PC-3 (cell line): ENCODE measurements at regions of chr15 and their contacts with region 1.

Region 1: GRCh38 chr15:40382580-40383456 is at the start of gene KNSTRN:
- DNase-seq: peak; percentile 96
- ATAC-seq: peak; percentile 75
- H3K4me3 ChIP-seq: peak within 1 kb of the TSS; percentile 91
- H3K27ac ChIP-seq: peak within 1 kb of the TSS; percentile 19
- H3K4me1 ChIP-seq: peaks cover 35% of the 10 kb centered on the region
- H3K27me3 ChIP-seq: no peaks in the 10 kb centered on the region
- CTCF ChIP-seq: no peak
- total RNA-seq, gene KNSTRN: 115 and 125 TPM in 2 replicates

Region 2: DNA sequence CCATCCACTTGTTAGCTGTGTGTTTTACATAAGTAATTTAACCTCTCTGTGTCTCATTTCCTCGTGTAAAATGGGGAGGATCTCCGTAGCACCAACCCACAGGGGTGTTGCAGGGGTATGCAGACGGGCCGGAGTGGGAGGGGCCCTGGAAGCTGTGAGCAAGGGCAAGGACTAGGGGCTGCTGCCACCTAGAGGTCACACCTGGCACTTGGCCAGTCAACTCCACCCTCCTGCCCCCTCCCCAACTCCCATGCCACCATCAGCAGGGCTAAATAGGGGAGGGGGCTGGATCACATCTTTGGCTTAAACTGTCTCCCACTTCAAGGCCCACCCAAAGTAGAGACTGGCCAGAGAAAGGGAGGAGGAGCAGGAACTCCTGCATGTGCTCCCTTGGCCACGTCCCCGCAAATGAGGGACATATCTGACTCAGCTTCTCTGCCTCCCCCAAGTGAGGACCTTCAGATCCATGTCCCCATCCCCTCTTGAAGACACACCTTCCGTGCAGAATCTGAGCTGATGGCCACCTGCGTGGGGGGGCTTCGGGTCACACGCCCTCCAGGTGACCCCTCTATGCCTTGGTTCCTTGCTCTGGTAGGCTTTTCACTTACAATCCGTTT is 44.7 kb before region 1 on chr15:
- CTCF ChIA-PET with region 1: no interaction called
- POLR2A ChIA-PET with region 1: no interaction called
- intact Hi-C with region 1: no loop called
- DNase-seq: peak; percentile 73
- ATAC-seq: peak; percentile 3; the same call in 1 of the 2 replicates
- H3K4me3 ChIP-seq: peak overlapping the region; percentile 75
- H3K27ac ChIP-seq: peak overlapping the region; percentile 100
- H3K4me1 ChIP-seq: peaks cover 66% of the 10 kb centered on the region
- H3K27me3 ChIP-seq: no peaks in the 10 kb centered on the region
- CTCF ChIP-seq: peak; percentile 90

Region 3: DNA sequence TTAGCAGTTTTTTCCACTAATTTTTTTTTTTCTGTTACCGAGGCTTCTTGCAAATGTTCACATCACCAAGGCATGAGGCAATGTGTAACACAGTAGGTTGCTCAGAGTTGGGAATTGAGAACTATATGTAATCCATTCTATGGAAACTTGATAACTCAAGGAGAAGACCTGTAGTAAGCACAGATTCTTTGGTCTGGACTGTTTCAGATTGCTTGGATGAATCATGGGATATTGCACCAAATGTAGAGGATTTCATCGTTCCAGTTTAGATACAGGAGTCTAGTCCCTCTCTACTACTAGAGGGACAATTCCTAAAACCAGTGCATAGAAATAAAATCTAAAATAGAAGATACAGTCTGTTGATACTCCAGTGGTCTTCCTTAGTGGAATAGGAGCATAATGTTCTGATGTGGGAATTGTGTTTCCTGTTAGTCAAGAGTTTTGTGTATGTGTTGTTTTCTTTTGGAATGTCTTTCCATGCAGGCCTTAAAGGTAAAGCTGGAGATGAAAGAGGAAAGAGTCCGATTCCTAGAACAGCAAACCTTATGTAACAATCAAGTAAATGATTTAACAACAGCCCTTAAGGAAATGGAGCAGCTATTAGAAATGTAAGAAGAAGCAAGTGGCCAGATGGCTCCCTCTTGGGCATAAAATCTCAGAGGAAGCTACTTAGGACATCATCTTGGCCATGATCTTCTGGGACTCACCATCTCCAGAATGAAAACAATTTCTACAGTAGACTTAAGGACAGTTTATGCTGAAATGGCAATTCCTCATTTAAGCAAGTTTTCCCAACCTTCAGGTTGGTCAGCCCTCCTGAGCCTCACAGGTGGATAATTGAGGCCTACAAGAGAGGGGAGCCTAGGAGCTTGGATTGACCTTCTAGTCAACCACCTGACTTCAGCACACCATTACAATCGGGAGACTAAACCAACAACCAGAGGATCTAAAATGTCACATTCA is 10.4 kb after region 1 on chr15:
- CTCF ChIA-PET with region 1: no interaction called
- POLR2A ChIA-PET with region 1: no interaction called
- intact Hi-C with region 1: no loop called
- DNase-seq: no peak
- ATAC-seq: no peak
- H3K4me3 ChIP-seq: no peak overlapping the region
- H3K27ac ChIP-seq: no peak overlapping the region
- H3K4me1 ChIP-seq: no peaks in the 10 kb centered on the region
- H3K27me3 ChIP-seq: no peaks in the 10 kb centered on the region
- CTCF ChIP-seq: no peak

Region 4: GRCh38 chr15:40405501-40406381 is 22.9 kb after region 1 on chr15 and contains the start of gene IVD:
- CTCF ChIA-PET with region 1: no interaction called
- POLR2A ChIA-PET with region 1: interaction called, 4 read pairs
- intact Hi-C with region 1: loop called (anchors 1 kb)
- DNase-seq: peak; percentile 98
- ATAC-seq: peak; percentile 98
- H3K4me3 ChIP-seq: peak within 1 kb of the TSS; percentile 92
- H3K27ac ChIP-seq: peak within 1 kb of the TSS; percentile 55
- H3K4me1 ChIP-seq: peaks cover 21% of the 10 kb centered on the region
- H3K27me3 ChIP-seq: no peaks in the 10 kb centered on the region
- CTCF ChIP-seq: no peak
- total RNA-seq, gene IVD: 58.9 and 59.4 TPM in 2 replicates

Region 5: DNA sequence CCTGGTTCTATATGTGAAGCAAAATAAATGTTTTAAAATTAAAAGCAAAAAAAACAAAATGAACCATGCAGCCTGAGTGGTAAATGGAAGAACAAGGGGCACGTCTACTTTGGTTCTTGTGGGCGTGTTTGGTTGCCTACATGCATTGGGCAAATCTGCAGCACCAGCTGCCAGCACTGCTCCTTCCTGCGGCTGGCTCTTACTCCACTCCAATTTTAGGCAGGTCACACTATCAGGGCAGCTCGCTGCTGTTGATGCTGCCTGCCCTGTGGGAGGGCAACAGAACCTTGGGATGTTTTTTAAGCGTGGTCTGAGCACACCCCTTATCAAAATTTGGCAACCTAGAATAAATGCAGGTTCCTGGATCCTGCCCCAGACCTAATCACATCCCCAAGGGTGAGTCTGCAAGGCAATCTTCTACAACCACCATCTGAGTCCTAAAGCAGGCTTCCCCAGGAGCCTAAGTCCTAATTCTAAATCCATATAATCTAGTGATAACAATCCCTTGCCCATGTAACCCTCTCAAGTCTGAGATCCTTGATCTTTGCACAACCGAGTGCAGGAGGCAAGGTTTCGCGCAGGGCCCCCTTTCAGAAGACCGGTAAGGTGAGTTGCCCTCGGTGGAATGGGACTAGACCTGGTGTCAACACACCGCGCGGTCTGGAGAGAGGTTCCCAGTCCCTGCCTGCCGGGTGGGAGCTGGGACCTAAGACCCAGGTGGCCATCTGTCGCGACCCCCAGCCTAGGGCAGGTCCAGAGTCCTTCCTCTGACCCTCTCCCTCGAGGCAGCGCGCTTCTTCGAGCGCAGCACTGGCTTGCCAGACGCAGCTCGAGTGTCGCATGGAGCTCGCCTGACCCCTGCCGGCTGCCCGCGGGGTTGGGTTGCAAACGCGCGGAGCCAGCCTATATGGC is 38.7 kb after region 1 on chr15:
- CTCF ChIA-PET with region 1: interaction called, 3 read pairs
- POLR2A ChIA-PET with region 1: interaction called, 3 read pairs
- intact Hi-C with region 1: loop called (anchors 1 kb)
- DNase-seq: peak; percentile 82
- ATAC-seq: peak; percentile 84
- H3K4me3 ChIP-seq: peak overlapping the region; percentile 36; the same call in 1 of the 2 replicates
- H3K27ac ChIP-seq: peak overlapping the region; percentile 31
- H3K4me1 ChIP-seq: peaks cover 23% of the 10 kb centered on the region
- H3K27me3 ChIP-seq: no peaks in the 10 kb centered on the region
- CTCF ChIP-seq: peak; percentile 94